ENCODE measurements at regions of chr3 and their contacts with region 1.

Region 1: GRCh38 chr3:149536429-149536828 is 61.9 kb downstream of the TM4SF4 start:
- DNase-seq: no peak
- CTCF ChIP-seq: no peak

Region 2: DNA sequence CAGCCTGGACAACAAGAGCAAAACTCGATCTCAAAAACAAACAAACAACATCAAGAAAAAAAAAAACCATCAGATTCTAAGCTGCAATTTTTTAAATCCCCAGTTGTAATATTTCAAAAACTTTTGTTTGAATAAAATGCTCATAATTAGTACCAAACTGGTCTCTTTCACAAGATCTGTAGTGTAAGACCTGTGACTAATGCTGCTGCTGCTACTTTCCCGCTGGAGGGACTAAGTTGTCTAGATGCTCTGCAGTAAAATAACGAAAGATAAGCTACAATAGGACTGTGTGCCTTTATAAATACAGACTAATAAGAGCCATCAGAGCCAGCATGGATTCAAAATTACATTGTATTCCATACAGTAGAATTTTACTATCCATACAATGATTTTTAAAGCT is 16.5 kb before region 1 on chr3:
- CTCF ChIA-PET with region 1: interaction called, 22 read pairs
- POLR2A ChIA-PET with region 1: no interaction called
- DNase-seq: no peak
- CTCF ChIP-seq: no peak

Region 3: DNA sequence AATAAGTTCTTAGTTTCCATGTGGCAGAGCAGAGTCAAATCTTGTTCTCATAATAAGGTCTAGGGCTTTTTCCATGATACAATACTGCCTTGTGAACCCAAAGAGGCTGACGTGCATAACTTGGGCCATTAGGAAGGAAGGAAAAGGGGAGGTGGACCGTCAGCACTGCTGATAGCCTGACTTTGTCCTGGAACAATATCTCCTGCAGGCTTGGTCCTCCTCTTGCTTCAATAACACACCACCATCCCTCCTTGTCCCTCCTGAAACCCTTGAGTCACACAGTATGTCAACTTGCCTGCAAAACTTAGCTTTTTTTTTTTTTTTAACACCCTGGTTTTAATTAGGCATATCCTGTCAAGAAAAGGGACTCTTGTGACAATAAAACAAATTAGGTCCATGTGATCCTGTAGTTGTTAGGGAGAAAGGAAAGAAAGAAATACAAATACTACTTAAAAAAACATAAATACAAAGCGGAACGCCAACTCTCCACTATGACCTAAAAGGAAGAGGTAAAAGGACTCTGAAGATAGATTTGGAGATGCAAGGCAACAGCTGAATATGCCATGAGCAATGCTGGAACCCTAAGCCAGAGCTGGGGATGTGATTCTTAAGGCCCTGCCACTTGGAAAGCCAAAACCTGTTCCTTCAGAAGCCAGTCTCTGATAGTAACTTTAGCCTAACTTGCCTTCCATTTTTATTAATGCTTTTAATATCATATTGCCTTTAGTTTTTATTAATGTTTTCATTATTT is 54.4 kb after region 1 on chr3:
- CTCF ChIA-PET with region 1: no interaction called
- POLR2A ChIA-PET with region 1: no interaction called
- DNase-seq: no peak
- CTCF ChIP-seq: no peak

Region 4: DNA sequence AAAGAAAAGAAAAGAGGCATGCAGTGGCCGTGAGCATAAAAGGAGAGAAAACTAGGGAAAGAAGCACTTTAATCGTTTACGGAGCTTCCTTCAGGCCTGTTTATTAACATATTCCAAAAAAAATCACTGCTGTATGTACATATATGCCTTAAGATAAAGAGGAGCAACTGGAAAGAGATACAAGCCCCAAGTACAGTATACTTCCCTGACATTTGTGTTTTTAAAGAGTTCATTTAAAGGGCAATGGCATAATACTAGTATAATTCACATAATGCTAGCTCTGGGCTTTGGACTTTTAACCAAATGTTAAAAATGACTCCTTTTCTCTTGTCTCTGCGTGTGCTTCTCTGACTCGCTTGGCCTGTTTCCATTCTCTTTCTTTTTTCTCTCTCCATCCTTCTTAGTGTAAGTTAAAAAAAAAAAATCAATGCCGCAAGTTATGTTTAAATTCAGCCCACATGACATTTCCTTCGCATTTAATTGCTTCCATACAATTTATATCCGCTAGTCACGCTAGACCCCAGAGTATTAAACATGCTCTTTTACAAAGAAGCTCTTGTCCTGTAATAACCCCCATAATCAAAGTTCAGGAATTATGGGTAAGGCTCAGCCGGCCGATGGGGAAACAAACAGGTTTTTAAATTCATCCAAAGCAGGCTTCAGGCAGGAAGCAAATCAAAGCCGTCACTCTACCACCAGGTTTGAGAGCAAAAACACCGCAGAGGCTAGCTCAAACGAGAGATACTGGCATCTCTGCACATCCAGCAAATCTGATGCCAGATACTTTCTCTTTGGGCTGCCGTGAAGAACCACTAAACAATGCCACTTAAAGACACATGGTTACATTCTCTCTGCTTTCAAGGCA is 102.0 kb after region 1 on chr3:
- CTCF ChIA-PET with region 1: no interaction called
- POLR2A ChIA-PET with region 1: no interaction called
- DNase-seq: no peak
- CTCF ChIP-seq: no peak

Region 5: DNA sequence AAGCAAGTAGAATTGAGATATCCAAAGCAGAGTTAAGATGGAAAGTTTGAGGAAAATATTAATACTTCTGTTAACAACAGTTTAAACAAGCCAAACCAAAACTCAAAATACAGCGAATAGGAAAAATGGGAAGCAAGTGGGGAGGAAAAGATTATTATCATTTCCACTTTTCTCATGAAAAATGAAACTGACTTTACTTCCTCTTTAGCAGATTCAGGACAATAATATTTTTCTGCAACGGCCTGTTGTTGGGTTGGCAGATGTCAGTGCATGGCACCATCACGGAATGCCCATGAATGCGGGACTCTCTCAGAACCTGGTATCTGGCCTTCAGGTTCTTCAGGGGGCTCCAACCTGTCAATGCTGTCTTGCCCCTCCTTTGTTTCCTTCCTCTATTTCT is 244.8 kb after region 1 on chr3:
- CTCF ChIA-PET with region 1: interaction called, 13 read pairs
- POLR2A ChIA-PET with region 1: no interaction called
- DNase-seq: no peak
- CTCF ChIP-seq: no peak